ENCODE measurements at regions of chr17 and their contacts with region 1.

Region 1: GRCh38 chr17:32783602-32784001 is 93.3 kb downstream of the MYO1D start:
- DNase-seq: peak in 2 of 5 donors; percentile 40 to 45
- H3K4me3 ChIP-seq: no peak overlapping the region
- H3K4me3 Mint-ChIP-seq: no peak overlapping the region
- H3K27ac ChIP-seq: no peak overlapping the region
- H3K27ac Mint-ChIP-seq: no peak overlapping the region
- H3K4me1 ChIP-seq: no peaks in the 10 kb centered on the region
- H3K4me1 Mint-ChIP-seq: no peaks in the 10 kb centered on the region
- H3K27me3 ChIP-seq: no peaks in the 10 kb centered on the region
- H3K27me3 Mint-ChIP-seq: no peaks in the 10 kb centered on the region

Region 2: GRCh38 chr17:32732900-32733299 is 50.7 kb before region 1 on chr17:
- CTCF ChIA-PET with region 1: no interaction called
- POLR2A ChIA-PET with region 1: no interaction called
- DNase-seq: no peak
- H3K4me3 ChIP-seq: no peak overlapping the region
- H3K4me3 Mint-ChIP-seq: no peak overlapping the region
- H3K27ac ChIP-seq: no peak overlapping the region
- H3K27ac Mint-ChIP-seq: no peak overlapping the region
- H3K4me1 ChIP-seq: no peaks in the 10 kb centered on the region
- H3K4me1 Mint-ChIP-seq: no peaks in the 10 kb centered on the region
- H3K27me3 ChIP-seq: no peaks in the 10 kb centered on the region
- H3K27me3 Mint-ChIP-seq: no peaks in the 10 kb centered on the region

Region 3: DNA sequence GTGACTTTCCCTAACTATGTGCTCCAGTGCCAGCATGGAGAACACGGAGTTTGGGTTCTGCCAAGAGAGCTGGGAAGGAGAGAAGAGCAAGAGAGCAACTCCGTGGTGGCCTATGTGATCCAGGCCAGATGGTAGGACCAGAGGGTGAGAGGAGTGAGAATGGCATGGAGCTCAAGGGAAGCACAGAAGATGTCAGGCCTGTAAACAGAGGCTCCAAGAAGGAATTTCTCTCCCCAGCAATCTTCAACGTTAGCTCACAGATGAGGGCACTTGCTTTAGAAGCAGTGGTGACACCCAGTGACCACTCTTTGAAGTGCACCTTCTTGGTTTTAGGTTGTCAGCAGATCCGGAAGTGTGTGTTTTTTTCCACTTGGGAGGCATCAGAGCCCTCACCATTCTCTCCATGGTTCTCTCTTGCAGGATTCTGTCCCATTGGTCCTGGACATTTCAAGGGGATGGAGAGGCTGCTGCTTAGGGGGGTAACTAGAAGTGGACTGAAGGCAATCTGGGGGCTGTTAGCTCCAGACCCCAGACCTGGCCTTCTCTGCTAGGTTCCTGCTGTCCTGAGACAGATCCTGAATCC is 126.3 kb after region 1 on chr17:
- CTCF ChIA-PET with region 1: interaction called, 18 read pairs
- POLR2A ChIA-PET with region 1: no interaction called
- DNase-seq: peak; percentile 6 to 59 (median 23)
- H3K4me3 ChIP-seq: no peak overlapping the region
- H3K4me3 Mint-ChIP-seq: no peak overlapping the region
- H3K27ac ChIP-seq: no peak overlapping the region
- H3K27ac Mint-ChIP-seq: peak overlapping the region in 2 of 8 donors; percentile 3 to 22
- H3K4me1 ChIP-seq: no peaks in the 10 kb centered on the region
- H3K4me1 Mint-ChIP-seq: peaks cover 0 to 5% (median 4%) of the 10 kb centered on the region in 3 donors
- H3K27me3 ChIP-seq: no peaks in the 10 kb centered on the region
- H3K27me3 Mint-ChIP-seq: peaks cover 4 to 17% of the 10 kb centered on the region in 2 donors

Region 4: GRCh38 chr17:32936894-32937500 is 153.4 kb after region 1 on chr17:
- CTCF ChIA-PET with region 1: interaction called, 56 read pairs
- POLR2A ChIA-PET with region 1: no interaction called
- DNase-seq: peak; percentile 32 to 68 (median 39)
- H3K4me3 ChIP-seq: no peak overlapping the region
- H3K4me3 Mint-ChIP-seq: peak overlapping the region in 4 of 7 donors; percentile 9 to 63 (median 46)
- H3K27ac ChIP-seq: no peak overlapping the region
- H3K27ac Mint-ChIP-seq: no peak overlapping the region
- H3K4me1 ChIP-seq: no peaks in the 10 kb centered on the region
- H3K4me1 Mint-ChIP-seq: peaks cover 0 to 6% (median 4%) of the 10 kb centered on the region in 3 donors
- H3K27me3 ChIP-seq: no peaks in the 10 kb centered on the region
- H3K27me3 Mint-ChIP-seq: peaks cover 7 to 50% of the 10 kb centered on the region in 2 donors

Measured in CD8-positive, alpha-beta memory T cell (primary cell).